ENCODE measurements at regions of chr9 and their contacts with region 1.

Region 1: GRCh38 chr9:20584968-20585643 is 37.2 kb downstream of the MLLT3 start:
- DNase-seq: no peak
- ATAC-seq: no peak
- H3K4me3 ChIP-seq: no peak overlapping the region
- H3K4me3 Mint-ChIP-seq: no peak overlapping the region
- H3K27ac ChIP-seq: no peak overlapping the region
- H3K27ac Mint-ChIP-seq: peak overlapping the region in 1 of 9 donors; percentile 42
- H3K4me1 ChIP-seq: peaks cover 0 to 19% of the 10 kb centered on the region in 2 donors
- H3K4me1 Mint-ChIP-seq: peaks cover 24 to 72% (median 64%) of the 10 kb centered on the region in 7 donors
- H3K27me3 ChIP-seq: no peaks in the 10 kb centered on the region
- H3K27me3 Mint-ChIP-seq: no peaks in the 10 kb centered on the region

Region 2: DNA sequence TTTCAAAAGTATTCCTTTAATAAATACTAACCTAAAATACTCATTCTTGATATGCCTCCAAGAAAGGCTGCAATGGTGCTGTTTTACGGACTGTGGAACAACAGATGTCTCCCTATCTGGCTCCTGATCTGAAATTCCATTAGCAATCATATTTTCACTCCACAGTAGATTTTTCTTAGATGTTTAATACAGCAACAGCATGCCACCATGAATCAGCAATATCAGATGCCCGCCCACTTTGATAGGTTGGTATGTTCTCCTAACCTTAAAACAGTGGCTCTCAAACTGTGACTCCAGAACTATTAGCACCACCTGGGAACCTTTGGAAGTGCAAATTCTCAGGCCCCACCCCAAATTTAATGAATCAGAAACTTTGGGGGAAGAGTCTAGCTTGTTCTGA is 73.0 kb before region 1 on chr9:
- CTCF ChIA-PET with region 1: no interaction called
- POLR2A ChIA-PET with region 1: no interaction called
- intact Hi-C with region 1: no loop called
- DNase-seq: no peak
- ATAC-seq: no peak
- H3K4me3 ChIP-seq: no peak overlapping the region
- H3K4me3 Mint-ChIP-seq: peak overlapping the region in 3 of 10 donors; percentile 10 to 65 (median 40)
- H3K27ac ChIP-seq: no peak overlapping the region
- H3K27ac Mint-ChIP-seq: peak overlapping the region; percentile 38 to 94 (median 77)
- H3K4me1 ChIP-seq: peaks cover 8 to 52% of the 10 kb centered on the region in 2 donors
- H3K4me1 Mint-ChIP-seq: peaks cover 61 to 88% (median 83%) of the 10 kb centered on the region in 7 donors
- H3K27me3 ChIP-seq: no peaks in the 10 kb centered on the region
- H3K27me3 Mint-ChIP-seq: no peaks in the 10 kb centered on the region

Region 3: GRCh38 chr9:20599195-20599594 is 14.1 kb after region 1 on chr9:
- CTCF ChIA-PET with region 1: no interaction called
- POLR2A ChIA-PET with region 1: interaction called, 4 read pairs
- intact Hi-C with region 1: loop called (anchors 2 kb)
- DNase-seq: no peak
- ATAC-seq: no peak
- H3K4me3 ChIP-seq: no peak overlapping the region
- H3K4me3 Mint-ChIP-seq: peak overlapping the region in 3 of 10 donors; percentile 12 to 44 (median 33)
- H3K27ac ChIP-seq: no peak overlapping the region
- H3K27ac Mint-ChIP-seq: peak overlapping the region in 1 of 9 donors; percentile 52
- H3K4me1 ChIP-seq: peaks cover 4 to 26% of the 10 kb centered on the region in 2 donors
- H3K4me1 Mint-ChIP-seq: peaks cover 49 to 94% (median 86%) of the 10 kb centered on the region in 7 donors
- H3K27me3 ChIP-seq: no peaks in the 10 kb centered on the region
- H3K27me3 Mint-ChIP-seq: no peaks in the 10 kb centered on the region